ENCODE measurements at regions of chr3 and their contacts with region 1.

Region 1: DNA sequence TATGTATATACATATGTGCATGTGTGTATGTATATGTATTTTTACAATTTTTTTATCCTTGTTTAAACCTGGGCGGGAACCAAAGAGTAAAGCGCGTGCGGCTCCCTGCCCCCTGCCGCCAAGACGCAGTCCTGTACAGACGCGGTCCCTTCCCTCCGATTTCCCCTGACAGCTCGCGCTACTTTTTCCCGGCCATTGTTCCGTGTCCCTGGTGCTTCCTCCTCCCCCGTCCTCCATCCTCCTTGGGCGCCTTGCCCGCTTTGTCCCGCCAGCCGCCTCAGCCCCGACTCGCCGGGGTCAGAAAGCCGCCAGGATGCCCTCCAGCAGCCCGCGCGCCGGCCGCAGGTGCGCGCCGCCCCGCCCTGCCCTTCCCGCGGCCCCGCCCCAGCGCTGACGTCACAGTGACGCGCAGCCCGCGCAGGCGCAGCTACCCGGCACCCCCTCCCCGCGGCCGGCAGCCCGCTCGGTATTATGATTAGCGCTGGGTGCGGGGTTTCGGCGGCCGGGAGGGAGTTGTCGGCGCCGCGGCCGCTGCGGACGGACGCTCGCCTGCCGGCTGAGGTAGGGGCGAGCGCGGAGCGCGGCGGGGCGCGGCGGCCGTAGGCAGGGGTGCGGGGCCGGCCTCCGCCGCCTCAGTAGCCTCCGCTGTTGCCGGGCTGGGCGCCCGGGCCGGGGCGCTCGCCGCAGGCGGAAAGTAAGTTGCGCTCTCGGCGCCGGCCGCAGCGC is at the start of gene SNRK:
- DNase-seq: peak; percentile 95
- ATAC-seq: peak; percentile 77
- H3K4me3 Mint-ChIP-seq: peak within 1 kb of the TSS; percentile 94
- H3K27ac Mint-ChIP-seq: peak within 1 kb of the TSS; percentile 96
- H3K4me1 Mint-ChIP-seq: peaks cover 39% of the 10 kb centered on the region
- H3K27me3 Mint-ChIP-seq: no peaks in the 10 kb centered on the region
- total RNA-seq, gene SNRK: 19.5 to 22.9 TPM

Region 2: DNA sequence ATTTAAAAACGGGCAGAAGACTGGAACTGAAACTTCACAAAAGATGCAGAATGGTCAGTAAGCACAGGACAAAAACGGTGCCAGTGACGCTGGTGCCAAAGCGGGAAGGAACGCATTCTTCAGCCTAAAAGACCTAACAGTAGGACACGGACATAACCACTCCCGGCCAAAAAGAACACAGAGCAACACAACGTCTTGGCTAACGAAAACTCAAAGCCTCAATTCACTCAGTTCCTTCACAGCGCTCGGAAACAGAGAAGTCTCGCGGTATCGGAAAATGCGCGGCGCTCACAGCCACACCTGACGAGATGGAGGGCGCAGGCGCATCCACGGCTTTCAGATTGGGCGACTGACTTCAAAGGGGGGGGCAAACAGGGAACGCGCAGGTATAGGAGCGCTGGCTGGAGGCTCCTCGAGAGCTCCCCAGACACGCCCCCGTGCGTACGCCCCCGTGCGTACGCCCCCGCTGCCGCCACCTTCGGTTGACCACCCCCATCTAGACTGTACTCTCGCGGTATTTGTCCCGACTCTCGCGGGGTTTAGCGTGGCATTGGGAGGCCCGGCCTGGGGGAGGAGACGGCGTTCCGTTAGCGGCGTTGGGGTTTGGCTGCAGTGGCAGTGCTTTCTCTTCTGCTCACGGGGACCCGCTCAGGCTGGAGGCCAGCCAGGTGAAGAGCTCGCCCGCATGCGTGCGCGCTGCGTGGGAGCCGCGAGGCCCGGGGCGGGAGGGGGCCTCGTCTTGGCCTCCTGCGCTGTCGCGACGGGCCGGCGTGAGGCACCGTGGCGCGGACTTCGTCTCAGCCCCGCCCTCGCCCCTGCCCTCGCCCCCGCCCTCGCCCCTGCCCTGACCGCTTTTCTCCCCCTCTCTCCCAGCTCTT is 685.9 kb before region 1 on chr3 and contains the start of gene NKTR:
- CTCF ChIA-PET with region 1: no interaction called
- POLR2A ChIA-PET with region 1: no interaction called
- intact Hi-C with region 1: loop called in 1 of 2 experiments (anchors 1 kb)
- DNase-seq: peak; percentile 100
- ATAC-seq: peak; percentile 91
- H3K4me3 Mint-ChIP-seq: peak within 1 kb of the TSS; percentile 80
- H3K27ac Mint-ChIP-seq: peak within 1 kb of the TSS; percentile 95
- H3K4me1 Mint-ChIP-seq: peaks cover 33% of the 10 kb centered on the region
- H3K27me3 Mint-ChIP-seq: no peaks in the 10 kb centered on the region
- total RNA-seq, gene NKTR: 50.8 to 59.2 TPM

Region 3: DNA sequence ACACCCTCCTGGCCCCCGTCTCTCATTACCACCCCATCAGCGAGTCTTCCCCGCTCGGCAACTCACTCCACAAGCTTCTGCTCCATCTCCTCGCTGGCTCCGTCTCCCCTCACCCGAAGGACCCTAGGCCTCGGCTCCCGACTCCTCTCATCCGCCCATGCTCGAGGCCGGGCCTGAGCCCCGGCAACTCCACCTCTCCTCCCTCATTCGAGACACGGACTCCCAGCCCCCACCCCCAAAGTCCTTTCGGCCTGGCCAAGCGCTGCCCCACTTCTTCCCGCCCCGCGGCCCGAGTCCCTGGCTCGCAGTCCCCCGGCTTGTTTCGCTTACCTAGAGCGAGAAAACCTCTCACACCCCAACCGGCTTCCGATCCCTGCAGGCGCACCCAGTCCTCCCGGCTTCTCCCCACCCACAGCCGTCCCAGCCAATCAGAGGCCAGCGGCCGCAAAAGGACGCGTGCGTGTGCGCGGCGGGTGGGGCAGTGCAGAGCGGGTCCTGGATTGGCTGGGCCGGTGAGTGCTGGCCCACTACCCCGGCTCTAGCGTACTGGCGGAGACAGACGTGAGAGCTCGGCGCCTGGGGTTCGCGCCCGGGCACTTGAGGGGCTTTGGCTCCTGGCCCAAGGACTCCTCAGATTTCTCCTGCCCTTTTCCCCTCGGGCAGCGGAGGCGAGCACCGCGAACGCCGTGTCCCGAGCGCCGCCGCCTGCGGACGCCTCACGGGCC is 482.0 kb before region 1 on chr3 and contains the start of gene HIGD1A:
- CTCF ChIA-PET with region 1: no interaction called
- POLR2A ChIA-PET with region 1: no interaction called
- intact Hi-C with region 1: loop called in 1 of 2 experiments (anchors 10 kb)
- DNase-seq: peak; percentile 97
- ATAC-seq: peak; percentile 99
- H3K4me3 Mint-ChIP-seq: peak within 1 kb of the TSS; percentile 91
- H3K27ac Mint-ChIP-seq: peak within 1 kb of the TSS; percentile 86
- H3K4me1 Mint-ChIP-seq: peaks cover 41% of the 10 kb centered on the region
- H3K27me3 Mint-ChIP-seq: peaks cover 6% of the 10 kb centered on the region
- total RNA-seq, gene HIGD1A: 74.9 to 77.8 TPM

Region 4: GRCh38 chr3:43162230-43163084 is 123.8 kb before region 1 on chr3:
- CTCF ChIA-PET with region 1: interaction called, 5 read pairs
- POLR2A ChIA-PET with region 1: no interaction called
- intact Hi-C with region 1: loop called (anchors 2 kb)
- DNase-seq: peak; percentile 57
- ATAC-seq: peak; percentile 84
- H3K4me3 Mint-ChIP-seq: peak overlapping the region; percentile 61
- H3K27ac Mint-ChIP-seq: peak overlapping the region; percentile 87
- H3K4me1 Mint-ChIP-seq: peaks cover 20% of the 10 kb centered on the region
- H3K27me3 Mint-ChIP-seq: no peaks in the 10 kb centered on the region

Region 5: DNA sequence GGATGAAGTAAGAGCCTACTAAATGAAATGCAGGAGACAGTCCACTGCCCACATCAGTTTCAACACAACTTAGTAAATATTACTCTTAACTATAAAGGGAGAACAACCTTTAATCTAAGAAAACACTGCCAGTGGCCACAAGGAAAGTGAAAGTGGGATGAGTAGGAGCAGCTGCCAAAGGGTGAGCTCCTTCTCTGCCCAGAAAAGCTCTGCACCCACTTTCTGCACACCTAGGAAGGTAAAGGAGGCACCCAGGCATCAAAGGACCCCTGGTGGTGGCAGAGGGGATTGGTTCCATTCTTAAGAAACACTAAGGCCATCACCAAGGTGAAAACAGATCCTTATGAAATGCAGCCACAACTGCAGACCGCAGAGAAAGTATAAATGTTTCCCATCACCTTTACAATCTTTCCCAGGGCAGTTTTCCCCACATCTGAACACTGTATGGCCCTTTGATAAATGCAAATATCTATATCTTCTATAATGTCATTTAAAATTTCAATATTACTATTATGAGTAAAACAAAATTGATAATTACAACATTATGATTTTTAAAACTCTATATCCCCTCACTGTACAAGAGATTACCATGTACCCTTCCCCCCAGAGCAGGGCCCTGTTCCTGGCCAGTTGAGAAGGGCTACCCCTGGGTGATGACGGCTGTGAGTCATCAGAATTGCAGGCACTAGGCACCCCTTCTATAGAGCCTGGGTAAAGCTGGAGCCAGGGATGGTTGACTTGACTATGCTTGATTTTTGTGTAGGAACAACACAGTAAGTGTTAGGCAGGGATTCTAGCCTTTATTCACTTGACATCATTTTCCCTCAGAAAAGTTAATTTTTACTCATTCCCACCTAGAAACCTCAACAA is 92.0 kb after region 1 on chr3:
- CTCF ChIA-PET with region 1: interaction called, 4 read pairs
- POLR2A ChIA-PET with region 1: interaction called, 3 read pairs
- intact Hi-C with region 1: loop called (anchors 2 to 5 kb)
- DNase-seq: peak; percentile 80
- ATAC-seq: peak; percentile 97
- H3K4me3 Mint-ChIP-seq: no peak overlapping the region
- H3K27ac Mint-ChIP-seq: no peak overlapping the region
- H3K4me1 Mint-ChIP-seq: peaks cover 15% of the 10 kb centered on the region
- H3K27me3 Mint-ChIP-seq: no peaks in the 10 kb centered on the region

Region 6: GRCh38 chr3:43503067-43503728 is 216.9 kb after region 1 on chr3:
- CTCF ChIA-PET with region 1: interaction called, 4 read pairs
- POLR2A ChIA-PET with region 1: no interaction called
- intact Hi-C with region 1: loop called (anchors 2 kb)
- DNase-seq: no peak
- ATAC-seq: peak; percentile 20
- H3K4me3 Mint-ChIP-seq: no peak overlapping the region
- H3K27ac Mint-ChIP-seq: peak overlapping the region; percentile 30
- H3K4me1 Mint-ChIP-seq: peaks cover 62% of the 10 kb centered on the region
- H3K27me3 Mint-ChIP-seq: peaks cover 15% of the 10 kb centered on the region